ENCODE measurements at regions of chr21 and their contacts with region 1.

Region 1: DNA sequence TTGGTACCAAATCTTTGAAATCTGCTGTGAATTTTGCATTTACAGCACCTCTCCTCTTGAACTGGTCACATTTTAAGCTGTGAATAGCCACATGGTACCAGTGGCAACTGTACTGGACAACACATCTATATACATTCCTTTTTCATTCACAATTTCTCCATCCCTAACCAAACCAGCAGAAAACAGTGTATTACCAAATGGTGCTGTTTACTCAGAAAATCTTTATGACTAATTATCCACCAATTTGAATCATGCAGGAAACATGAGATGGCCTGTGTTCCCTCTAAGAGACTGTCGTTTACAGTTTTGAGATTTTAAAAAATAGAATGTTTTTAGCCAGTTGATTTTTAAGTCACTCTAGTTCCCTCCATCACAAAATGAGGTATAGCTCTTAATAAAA is 17.6 kb upstream of the CCT8 start:
- DNase-seq: peak; percentile 63
- H3K4me3 ChIP-seq: no peak overlapping the region
- H3K27ac ChIP-seq: peak overlapping the region; percentile 65
- H3K4me1 ChIP-seq: peaks cover 22% of the 10 kb centered on the region
- H3K27me3 ChIP-seq: no peaks in the 10 kb centered on the region
- CTCF ChIP-seq: no peak
- POLR2A ChIP-seq: no peak

Region 2: GRCh38 chr21:29053011-29053553 is 38.0 kb before region 1 on chr21:
- CTCF ChIA-PET with region 1: no interaction called
- POLR2A ChIA-PET with region 1: no interaction called
- dilution Hi-C with region 1: no loop called
- intact Hi-C with region 1: no loop called
- DNase-seq: no peak
- H3K4me3 ChIP-seq: no peak overlapping the region
- H3K27ac ChIP-seq: no peak overlapping the region
- H3K4me1 ChIP-seq: no peaks in the 10 kb centered on the region
- H3K27me3 ChIP-seq: no peaks in the 10 kb centered on the region
- CTCF ChIP-seq: no peak
- POLR2A ChIP-seq: no peak

Region 3: GRCh38 chr21:29195981-29196669 is 105.1 kb after region 1 on chr21:
- CTCF ChIA-PET with region 1: interaction called, 3 read pairs
- POLR2A ChIA-PET with region 1: no interaction called
- dilution Hi-C with region 1: no loop called
- intact Hi-C with region 1: loop called (anchors 2 kb)
- DNase-seq: peak; percentile 90
- H3K4me3 ChIP-seq: peak overlapping the region in 2 of 3 experiments; percentile 38 to 44
- H3K27ac ChIP-seq: peak overlapping the region; percentile 92
- H3K4me1 ChIP-seq: peaks cover 32% of the 10 kb centered on the region
- H3K27me3 ChIP-seq: no peaks in the 10 kb centered on the region
- CTCF ChIP-seq: peak; percentile 47 to 56
- POLR2A ChIP-seq: no peak

Region 4: GRCh38 chr21:29342363-29342957 is 251.4 kb after region 1 on chr21:
- CTCF ChIA-PET with region 1: interaction called, 91 read pairs
- POLR2A ChIA-PET with region 1: no interaction called
- dilution Hi-C with region 1: no loop called
- intact Hi-C with region 1: no loop called
- DNase-seq: peak; percentile 91
- H3K4me3 ChIP-seq: no peak overlapping the region
- H3K27ac ChIP-seq: peak overlapping the region; percentile 82
- H3K4me1 ChIP-seq: peaks cover 29% of the 10 kb centered on the region
- H3K27me3 ChIP-seq: no peaks in the 10 kb centered on the region
- CTCF ChIP-seq: no peak
- POLR2A ChIP-seq: peak; percentile 33

Region 5: GRCh38 chr21:29351691-29352090 is 260.7 kb after region 1 on chr21:
- CTCF ChIA-PET with region 1: interaction called, 91 read pairs
- POLR2A ChIA-PET with region 1: no interaction called
- dilution Hi-C with region 1: no loop called
- intact Hi-C with region 1: loop called (anchors 1 kb)
- DNase-seq: no peak
- H3K4me3 ChIP-seq: no peak overlapping the region
- H3K27ac ChIP-seq: no peak overlapping the region
- H3K4me1 ChIP-seq: no peaks in the 10 kb centered on the region
- H3K27me3 ChIP-seq: no peaks in the 10 kb centered on the region
- CTCF ChIP-seq: no peak
- POLR2A ChIP-seq: no peak

Region 6: GRCh38 chr21:29372063-29372802 is 281.2 kb after region 1 on chr21:
- CTCF ChIA-PET with region 1: interaction called, 134 read pairs
- POLR2A ChIA-PET with region 1: no interaction called
- dilution Hi-C with region 1: no loop called
- intact Hi-C with region 1: loop called (anchors 1 kb)
- DNase-seq: peak; percentile 75
- H3K4me3 ChIP-seq: no peak overlapping the region
- H3K27ac ChIP-seq: no peak overlapping the region
- H3K4me1 ChIP-seq: peaks cover 4% of the 10 kb centered on the region
- H3K27me3 ChIP-seq: no peaks in the 10 kb centered on the region
- CTCF ChIP-seq: peak; percentile 57 to 61
- POLR2A ChIP-seq: no peak

Region 7: GRCh38 chr21:29477941-29478340 is 386.9 kb after region 1 on chr21:
- CTCF ChIA-PET with region 1: interaction called, 3 read pairs
- POLR2A ChIA-PET with region 1: no interaction called
- dilution Hi-C with region 1: no loop called
- intact Hi-C with region 1: loop called (anchors 1 kb)
- DNase-seq: no peak
- H3K4me3 ChIP-seq: no peak overlapping the region
- H3K27ac ChIP-seq: no peak overlapping the region
- H3K4me1 ChIP-seq: no peaks in the 10 kb centered on the region
- H3K27me3 ChIP-seq: peaks cover 0 to 2% of the 10 kb centered on the region in 2 experiments
- CTCF ChIP-seq: no peak
- POLR2A ChIP-seq: no peak

Region 8: GRCh38 chr21:29499734-29500343 is 408.8 kb after region 1 on chr21:
- CTCF ChIA-PET with region 1: no interaction called
- POLR2A ChIA-PET with region 1: no interaction called
- dilution Hi-C with region 1: no loop called
- intact Hi-C with region 1: loop called (anchors 5 kb)
- DNase-seq: peak; percentile 28
- H3K4me3 ChIP-seq: no peak overlapping the region
- H3K27ac ChIP-seq: no peak overlapping the region
- H3K4me1 ChIP-seq: no peaks in the 10 kb centered on the region
- H3K27me3 ChIP-seq: no peaks in the 10 kb centered on the region
- CTCF ChIP-seq: peak; percentile 59 to 74
- POLR2A ChIP-seq: no peak

Measured in endothelial cell of umbilical vein (primary cell).